ENCODE measurements at regions of chr1 and their contacts with region 1.

Region 1: DNA sequence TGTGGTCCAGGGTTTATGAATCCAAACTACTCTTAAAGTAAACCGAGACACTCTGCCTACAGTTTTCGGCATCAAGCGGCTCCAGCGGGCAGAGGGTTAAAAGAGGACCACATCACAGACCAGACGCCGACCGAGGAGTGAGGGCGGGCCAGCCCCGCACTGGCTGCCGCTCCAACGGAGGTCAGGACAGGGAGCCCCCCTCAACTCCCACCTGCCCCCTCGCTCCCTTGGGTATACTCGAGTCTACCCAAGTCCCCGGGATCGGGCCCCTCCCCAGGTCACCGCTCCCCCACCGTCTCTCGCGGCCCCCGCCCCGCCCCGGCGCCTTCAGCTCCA is 312 bp downstream of the ARNT start:
- DNase-seq: peak; percentile 45
- H3K4me3 ChIP-seq: peak overlapping the region; percentile 82 to 94 (median 84)
- H3K27ac ChIP-seq: peak overlapping the region; percentile 68
- H3K4me1 ChIP-seq: peaks cover 17% of the 10 kb centered on the region
- H3K27me3 ChIP-seq: no peaks in the 10 kb centered on the region
- CTCF ChIP-seq: peak in 1 of 2 donors; percentile 5

Region 2: DNA sequence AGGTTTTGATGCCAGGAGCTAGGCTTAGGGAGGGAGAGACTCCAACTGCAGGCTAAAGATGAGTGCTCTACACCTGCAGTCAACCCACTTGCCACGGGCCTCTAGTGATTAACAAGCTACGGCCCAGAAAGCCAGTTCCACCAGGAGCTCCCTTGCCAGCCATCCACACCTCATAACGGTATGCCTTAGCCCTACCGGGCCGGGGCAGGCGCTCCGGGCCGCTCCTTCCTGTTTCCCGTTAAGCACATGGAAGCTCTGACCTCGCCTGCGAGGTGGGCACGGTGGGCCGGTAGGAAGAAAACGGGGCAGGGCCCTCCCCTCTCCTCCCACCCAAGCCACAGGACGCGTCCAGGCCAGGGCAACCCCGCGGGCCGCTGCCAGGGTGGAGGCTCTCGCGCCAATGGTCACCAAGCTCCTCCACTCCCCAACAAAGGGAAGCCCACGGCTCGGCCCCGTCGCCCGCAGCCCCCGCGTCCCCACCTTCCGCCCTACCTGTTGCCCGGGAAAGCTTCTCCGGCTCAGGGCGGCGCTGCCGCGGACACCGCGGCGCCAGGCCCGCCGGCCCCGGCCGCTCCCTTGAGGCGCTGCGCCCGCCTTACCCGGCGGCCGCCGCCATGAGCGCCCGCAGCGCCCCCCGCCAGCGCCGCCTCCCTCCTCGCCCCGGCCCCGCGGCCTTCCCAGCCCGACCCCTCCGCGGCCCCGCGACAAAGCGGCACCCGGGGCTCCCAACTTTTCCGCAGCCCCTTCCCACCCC is 97.9 kb after region 1 on chr1:
- CTCF ChIA-PET with region 1: interaction called, 14 read pairs
- dilution Hi-C with region 1: no loop called
- in situ Hi-C with region 1: no loop called
- intact Hi-C with region 1: no loop called
- DNase-seq: peak; percentile 42
- H3K4me3 ChIP-seq: peak overlapping the region; percentile 78 to 83 (median 80)
- H3K27ac ChIP-seq: peak overlapping the region; percentile 32
- H3K4me1 ChIP-seq: peaks cover 44% of the 10 kb centered on the region
- H3K27me3 ChIP-seq: no peaks in the 10 kb centered on the region
- CTCF ChIP-seq: no peak

Region 3: GRCh38 chr1:151008190-151008860 is 132.2 kb after region 1 on chr1 and contains the start of gene PRUNE1:
- CTCF ChIA-PET with region 1: no interaction called
- dilution Hi-C with region 1: no loop called
- in situ Hi-C with region 1: no loop called
- intact Hi-C with region 1: loop called (anchors 5 kb)
- DNase-seq: peak; percentile 93
- H3K4me3 ChIP-seq: peak within 1 kb of the TSS; percentile 78 to 93 (median 80)
- H3K27ac ChIP-seq: peak within 1 kb of the TSS; percentile 97
- H3K4me1 ChIP-seq: peaks cover 47% of the 10 kb centered on the region
- H3K27me3 ChIP-seq: no peaks in the 10 kb centered on the region
- CTCF ChIP-seq: no peak
- total RNA-seq, gene PRUNE1: 9.4 to 16.3 TPM

Region 4: GRCh38 chr1:151227634-151228033 is 351.5 kb after region 1 on chr1:
- CTCF ChIA-PET with region 1: interaction called, 12 read pairs
- dilution Hi-C with region 1: no loop called
- in situ Hi-C with region 1: no loop called
- intact Hi-C with region 1: no loop called
- DNase-seq: no peak
- H3K4me3 ChIP-seq: no peak overlapping the region
- H3K27ac ChIP-seq: no peak overlapping the region
- H3K4me1 ChIP-seq: no peaks in the 10 kb centered on the region
- H3K27me3 ChIP-seq: no peaks in the 10 kb centered on the region
- CTCF ChIP-seq: no peak

Region 5: DNA sequence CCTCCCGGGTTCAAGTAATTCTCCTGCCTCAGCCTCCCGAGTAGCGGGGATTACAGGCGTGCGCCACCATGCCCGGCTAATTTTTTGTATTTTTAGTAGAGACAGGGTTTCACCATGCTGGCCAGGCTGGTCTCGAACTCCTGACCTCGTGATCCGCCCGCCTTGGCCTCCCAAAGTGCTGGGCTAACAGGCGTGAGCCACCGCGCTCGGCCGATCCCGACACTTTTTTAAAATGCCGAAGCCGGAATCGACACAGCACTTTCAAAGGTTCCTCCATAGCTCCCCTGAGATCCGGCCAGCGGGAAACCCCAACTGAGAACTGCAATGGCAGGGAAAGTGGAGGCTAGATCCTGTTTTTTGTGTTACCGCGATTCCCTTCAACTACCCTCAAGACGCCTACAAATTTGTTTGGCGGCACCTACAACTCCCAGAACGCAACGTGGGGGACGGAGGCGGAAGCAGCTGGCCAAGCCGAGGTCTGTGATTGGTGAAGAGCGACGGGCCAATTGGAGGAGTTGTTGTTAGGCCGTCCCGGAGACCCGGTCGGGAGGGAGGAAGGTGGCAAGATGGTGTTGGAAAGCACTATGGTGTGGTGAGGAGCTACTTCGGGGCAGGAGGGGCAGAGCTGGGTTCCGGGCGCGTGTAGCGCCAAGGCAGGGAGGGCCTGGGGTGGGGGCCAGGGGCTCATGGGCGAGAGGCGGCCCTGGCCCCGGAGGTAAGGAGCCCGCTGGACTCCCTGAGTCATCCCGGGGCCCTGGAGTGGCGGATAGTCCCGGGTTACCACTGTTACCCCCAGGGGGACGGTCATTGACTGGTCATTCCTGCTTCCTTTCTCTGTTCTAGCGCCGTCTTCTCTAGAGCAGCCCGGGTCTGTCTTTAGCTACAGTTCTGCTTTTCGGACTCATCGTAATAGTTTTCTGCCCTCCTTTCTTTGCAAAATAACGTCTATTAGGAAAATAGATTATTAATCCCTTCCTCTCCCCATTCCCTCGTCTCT is 378.4 kb after region 1 on chr1 and contains the start of gene PSMD4:
- CTCF ChIA-PET with region 1: no interaction called
- dilution Hi-C with region 1: no loop called
- in situ Hi-C with region 1: no loop called
- intact Hi-C with region 1: no loop called
- DNase-seq: peak; percentile 97
- H3K4me3 ChIP-seq: peak within 1 kb of the TSS; percentile 60 to 75 (median 72)
- H3K27ac ChIP-seq: peak within 1 kb of the TSS; percentile 70
- H3K4me1 ChIP-seq: peaks cover 9% of the 10 kb centered on the region
- H3K27me3 ChIP-seq: no peaks in the 10 kb centered on the region
- CTCF ChIP-seq: no peak
- total RNA-seq, gene PSMD4: 94.7 to 167 TPM

Measured in mammary epithelial cell (primary cell).